B cell (primary cell): ENCODE measurements at regions of chr3 and their contacts with region 1.

Region 1: DNA sequence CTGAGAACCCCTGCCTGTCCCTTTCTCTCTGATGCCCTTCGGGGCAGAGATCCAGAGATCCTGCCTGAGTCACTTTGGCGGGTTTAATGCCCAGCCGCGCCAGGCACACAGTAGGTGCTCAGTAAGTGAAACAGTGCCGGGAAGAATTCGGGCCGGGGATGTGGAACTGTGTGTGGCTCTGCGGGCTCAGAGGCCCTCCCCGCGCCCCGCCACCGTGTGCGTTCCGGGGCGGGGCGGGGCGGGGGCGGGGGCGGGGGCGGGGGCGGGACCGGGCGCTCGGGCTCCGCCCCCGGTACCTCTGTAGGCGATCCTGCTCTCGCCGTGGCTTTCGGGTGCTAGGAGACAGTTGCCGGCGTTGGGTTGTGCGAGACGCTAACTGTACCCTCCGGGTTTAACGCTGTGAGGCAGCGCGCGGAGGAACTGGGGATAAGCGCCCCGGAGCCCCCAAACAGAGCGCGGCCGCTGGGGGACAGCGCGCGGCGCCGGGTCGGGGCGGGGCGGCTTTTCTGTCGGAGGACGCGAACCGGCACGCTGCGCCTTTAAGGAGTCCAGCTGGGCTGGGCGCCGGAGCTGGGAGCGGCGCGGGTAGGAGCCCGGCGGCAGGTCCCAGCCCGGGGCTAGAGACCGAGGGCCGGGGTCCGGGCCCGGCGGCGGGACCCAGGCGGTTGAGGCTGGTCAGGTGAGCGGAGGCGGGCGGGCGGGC is at the start of gene ABHD6:
- DNase-seq: peak; percentile 93
- ATAC-seq: peak; percentile 75
- H3K4me3 ChIP-seq: peak within 1 kb of the TSS; percentile 51 to 96 (median 93)
- H3K4me3 Mint-ChIP-seq: peak within 1 kb of the TSS; percentile 97
- H3K27ac ChIP-seq: peak within 1 kb of the TSS; percentile 63 to 86
- H3K27ac Mint-ChIP-seq: peak within 1 kb of the TSS; percentile 94
- H3K4me1 ChIP-seq: peaks cover 41 to 48% of the 10 kb centered on the region in 2 donors
- H3K4me1 Mint-ChIP-seq: peaks cover 70% of the 10 kb centered on the region
- H3K27me3 ChIP-seq: no peaks in the 10 kb centered on the region
- H3K27me3 Mint-ChIP-seq: no peaks in the 10 kb centered on the region
- CTCF ChIP-seq: peak; percentile 15
- total RNA-seq, gene ABHD6: 22.2 and 24.2 TPM in 2 replicates

Region 2: GRCh38 chr3:58116161-58116955 is 121.0 kb before region 1 on chr3:
- CTCF ChIA-PET with region 1: no interaction called
- POLR2A ChIA-PET with region 1: no interaction called
- intact Hi-C with region 1: loop called (anchors 1 kb)
- DNase-seq: peak; percentile 95
- ATAC-seq: peak; percentile 93
- H3K4me3 ChIP-seq: peak overlapping the region in 1 of 5 experiments; percentile 1
- H3K4me3 Mint-ChIP-seq: peak overlapping the region; percentile 77
- H3K27ac ChIP-seq: peak overlapping the region; percentile 80 to 89
- H3K27ac Mint-ChIP-seq: peak overlapping the region; percentile 95
- H3K4me1 ChIP-seq: peaks cover 62 to 74% of the 10 kb centered on the region in 2 donors
- H3K4me1 Mint-ChIP-seq: peaks cover 73% of the 10 kb centered on the region
- H3K27me3 ChIP-seq: no peaks in the 10 kb centered on the region
- H3K27me3 Mint-ChIP-seq: no peaks in the 10 kb centered on the region
- CTCF ChIP-seq: no peak

Region 3: GRCh38 chr3:58200846-58201355 is 36.5 kb before region 1 on chr3:
- CTCF ChIA-PET with region 1: interaction called, 9 read pairs
- POLR2A ChIA-PET with region 1: interaction called, 10 read pairs
- intact Hi-C with region 1: loop called (anchors 1 kb)
- DNase-seq: peak; percentile 44
- ATAC-seq: no peak
- H3K4me3 ChIP-seq: peak overlapping the region in 3 of 5 experiments; percentile 25 to 43 (median 41)
- H3K4me3 Mint-ChIP-seq: peak overlapping the region; percentile 76
- H3K27ac ChIP-seq: peak overlapping the region; percentile 51 to 57
- H3K27ac Mint-ChIP-seq: peak overlapping the region; percentile 87
- H3K4me1 ChIP-seq: peaks cover 69 to 74% of the 10 kb centered on the region in 2 donors
- H3K4me1 Mint-ChIP-seq: peaks cover 67% of the 10 kb centered on the region
- H3K27me3 ChIP-seq: no peaks in the 10 kb centered on the region
- H3K27me3 Mint-ChIP-seq: no peaks in the 10 kb centered on the region
- CTCF ChIP-seq: no peak

Region 4: DNA sequence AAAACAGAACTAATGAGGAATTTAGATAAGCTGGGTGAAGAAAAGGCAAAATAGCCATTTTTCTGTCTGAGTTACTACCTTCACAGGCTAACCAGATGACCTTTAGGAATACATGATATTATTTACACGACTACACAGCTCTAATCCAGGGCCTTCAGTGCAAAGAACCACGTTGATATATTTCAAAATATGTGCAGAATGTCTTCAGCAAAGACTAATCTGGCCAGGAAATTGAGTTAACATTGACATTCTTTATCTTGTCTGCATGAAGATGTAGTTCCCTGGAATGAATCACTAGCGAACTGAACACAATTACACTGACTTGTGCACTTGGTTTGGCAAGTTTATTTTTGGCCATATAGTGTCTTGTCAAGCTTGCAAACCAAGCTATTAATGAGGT is 154.8 kb after region 1 on chr3:
- CTCF ChIA-PET with region 1: no interaction called
- POLR2A ChIA-PET with region 1: no interaction called
- intact Hi-C with region 1: no loop called
- DNase-seq: no peak
- ATAC-seq: no peak
- H3K4me3 ChIP-seq: no peak overlapping the region
- H3K4me3 Mint-ChIP-seq: no peak overlapping the region
- H3K27ac ChIP-seq: no peak overlapping the region
- H3K27ac Mint-ChIP-seq: no peak overlapping the region
- H3K4me1 ChIP-seq: peaks cover 9 to 19% of the 10 kb centered on the region in 2 donors
- H3K4me1 Mint-ChIP-seq: peaks cover 21% of the 10 kb centered on the region
- H3K27me3 ChIP-seq: no peaks in the 10 kb centered on the region
- H3K27me3 Mint-ChIP-seq: no peaks in the 10 kb centered on the region
- CTCF ChIP-seq: no peak